Posterior cingulate gyrus (tissue), 11 donors: ENCODE measurements at regions of chr11 and their contacts with region 1.

Region 1: GRCh38 chr11:86193297-86194095 is 51.1 kb upstream of the EED start:
- DNase-seq: peak in 5 of 10 donors; percentile 23 to 62 (median 40)

Region 2: GRCh38 chr11:85810871-85811611 is 382.5 kb before region 1 on chr11 and contains the start of gene SYTL2:
- intact Hi-C with region 1: no loop called
- DNase-seq: peak; percentile 54 to 96 (median 72)

Region 3: DNA sequence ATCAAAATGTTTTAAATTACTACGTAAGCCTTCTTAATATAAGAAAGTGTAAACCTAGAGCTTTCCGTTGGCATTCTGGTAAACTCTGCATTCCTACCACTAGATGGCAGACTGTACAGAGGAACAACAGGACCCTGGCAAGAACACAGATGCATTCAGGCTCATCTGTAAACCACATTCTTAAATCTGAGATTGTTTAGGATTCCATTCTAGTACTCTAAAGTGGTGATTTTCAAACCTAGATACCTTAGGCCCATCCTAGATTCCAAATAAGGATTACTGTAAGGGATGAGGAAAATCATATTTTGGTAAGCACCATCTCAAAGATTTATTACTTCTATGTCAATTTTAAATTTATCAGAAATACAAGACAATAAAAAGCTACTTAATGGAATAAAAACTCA is 151.5 kb before region 1 on chr11:
- intact Hi-C with region 1: loop called (anchors 5 kb)
- DNase-seq: peak in 3 of 10 donors; percentile 21 to 46 (median 36)

Region 4: GRCh38 chr11:86156381-86156955 is 37.0 kb before region 1 on chr11:
- intact Hi-C with region 1: loop called (anchors 5 kb)
- DNase-seq: no peak

Region 5: DNA sequence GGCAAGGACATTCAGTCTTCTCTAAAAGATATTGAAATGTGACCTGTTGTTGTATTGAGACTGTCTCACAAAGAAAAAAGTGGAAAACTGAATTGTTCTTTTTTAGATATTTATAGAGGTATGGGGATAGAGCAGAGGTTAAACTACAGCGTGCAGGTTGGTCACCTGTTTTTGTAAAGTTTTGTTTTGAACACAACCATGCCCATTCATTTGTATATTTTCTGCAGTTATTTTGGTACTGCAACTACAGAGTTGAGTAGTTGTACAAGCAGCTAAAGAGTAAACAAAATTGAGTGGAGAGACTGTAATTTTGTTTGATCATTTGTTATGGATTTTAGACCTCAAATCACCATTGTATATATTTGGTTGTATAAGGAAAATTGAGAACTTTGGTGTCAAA is 62.4 kb after region 1 on chr11:
- intact Hi-C with region 1: no loop called
- DNase-seq: no peak

Region 6: GRCh38 chr11:86383041-86383955 is 189.8 kb after region 1 on chr11:
- intact Hi-C with region 1: no loop called
- DNase-seq: no peak